ENCODE measurements at regions of chr7 and their contacts with region 1.

Region 1: DNA sequence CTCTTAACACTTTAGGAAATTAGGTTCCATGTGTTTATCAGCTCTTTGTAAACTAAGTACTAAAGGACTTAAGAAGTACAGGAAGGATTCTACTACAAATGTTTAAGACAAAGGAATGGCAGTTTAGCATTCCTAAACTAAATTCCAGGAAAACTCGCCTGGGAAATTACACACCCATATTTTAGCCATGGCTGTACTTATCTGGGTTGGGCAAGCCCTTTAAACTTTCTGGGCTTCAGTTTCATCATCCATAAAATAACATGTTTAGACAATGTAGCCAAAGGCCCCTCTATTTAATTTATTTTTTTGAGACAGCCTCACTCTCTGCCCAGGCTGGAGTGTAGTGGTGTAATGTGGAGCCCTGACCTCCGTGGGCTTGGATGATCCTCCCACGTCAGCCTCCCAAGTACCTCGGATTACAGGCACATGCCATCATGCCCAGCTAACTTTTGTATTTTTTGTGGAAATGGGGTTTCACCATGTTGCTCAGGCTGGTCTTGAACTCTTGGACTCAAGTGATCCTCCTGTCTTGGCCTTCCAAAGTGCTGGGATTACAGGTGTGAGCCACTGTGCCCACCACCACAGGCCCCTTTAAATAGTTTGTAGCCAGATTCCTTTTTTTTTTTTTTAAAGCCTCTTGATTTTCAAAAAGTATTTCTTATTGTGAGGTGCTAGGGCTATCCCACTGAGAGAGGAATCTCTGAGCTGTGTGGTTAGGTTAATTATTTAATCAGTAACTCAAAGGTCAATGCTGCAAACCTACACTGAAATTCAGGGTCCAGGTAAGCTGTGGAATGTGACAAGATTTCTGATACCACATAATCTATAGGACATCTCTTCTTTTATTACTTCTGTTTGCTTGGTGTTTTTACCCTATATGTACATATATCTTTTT is 32.1 kb downstream of the TMEM60 start:
- DNase-seq: no peak
- H3K4me3 ChIP-seq: no peak overlapping the region
- H3K27ac ChIP-seq: no peak overlapping the region
- H3K4me1 ChIP-seq: no peaks in the 10 kb centered on the region
- H3K27me3 ChIP-seq: no peaks in the 10 kb centered on the region
- CTCF ChIP-seq: no peak
- POLR2A ChIP-seq: no peak

Region 2: GRCh38 chr7:77727936-77728701 is 38.0 kb before region 1 on chr7:
- intact Hi-C with region 1: loop called (anchors 2 kb)
- DNase-seq: no peak
- H3K4me3 ChIP-seq: peak overlapping the region in 1 of 3 donors; percentile 4
- H3K27ac ChIP-seq: peak overlapping the region; percentile 54 to 60
- H3K4me1 ChIP-seq: peaks cover 0 to 3% of the 10 kb centered on the region in 2 donors
- H3K27me3 ChIP-seq: no peaks in the 10 kb centered on the region
- CTCF ChIP-seq: no peak
- POLR2A ChIP-seq: no peak

Measured in breast epithelium (tissue), 4 donors.